ENCODE measurements at regions of chr10 and their contacts with region 1.

Region 1: DNA sequence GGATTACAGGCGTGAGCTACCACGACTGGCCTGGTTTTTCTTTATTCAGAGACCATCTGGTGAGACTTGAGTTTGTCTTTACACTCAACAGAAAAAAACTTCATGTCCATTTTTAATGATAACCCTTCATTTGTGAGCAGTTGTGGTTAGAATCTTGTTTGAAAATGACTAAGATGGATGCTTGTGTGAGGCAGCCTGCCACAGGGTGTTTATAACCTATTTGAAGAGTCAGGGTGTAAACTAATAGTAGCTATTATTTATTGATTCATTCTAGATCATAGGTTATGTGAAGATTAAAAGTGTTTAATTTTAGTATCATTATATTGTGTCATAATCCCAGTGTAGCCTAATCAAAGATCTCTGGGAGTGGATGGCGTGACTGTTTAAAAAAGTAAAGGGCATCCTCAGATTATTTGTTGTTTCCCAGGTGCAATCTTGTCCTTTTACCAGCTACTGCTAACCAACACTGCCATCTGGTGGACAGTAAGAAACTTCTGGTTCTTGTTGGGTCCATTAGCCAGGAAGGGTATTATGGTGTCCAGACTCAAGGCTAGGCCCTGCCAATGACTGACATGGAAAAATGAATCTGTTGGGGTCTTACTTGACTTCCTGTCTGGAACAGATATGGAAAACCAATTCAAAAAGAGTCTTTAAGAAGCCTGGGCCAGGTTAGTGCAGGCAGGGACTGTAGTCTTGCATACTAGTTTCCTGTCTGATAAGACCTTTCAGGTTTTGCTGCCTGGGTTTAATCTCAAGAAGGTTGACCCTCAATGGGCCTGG is 24.9 kb downstream of the NRBF2 start:
- DNase-seq: peak; percentile 70
- ATAC-seq: peak; percentile 82
- H3K4me3 Mint-ChIP-seq: no peak overlapping the region
- H3K27ac Mint-ChIP-seq: peak overlapping the region; percentile 46
- H3K4me1 Mint-ChIP-seq: peaks cover 21% of the 10 kb centered on the region
- H3K27me3 Mint-ChIP-seq: no peaks in the 10 kb centered on the region

Region 2: GRCh38 chr10:62437696-62438095 is 720.3 kb before region 1 on chr10:
- CTCF ChIA-PET with region 1: interaction called, 11 read pairs
- DNase-seq: no peak
- ATAC-seq: peak; percentile 63
- H3K4me3 Mint-ChIP-seq: no peak overlapping the region
- H3K27ac Mint-ChIP-seq: no peak overlapping the region
- H3K4me1 Mint-ChIP-seq: peaks cover 15% of the 10 kb centered on the region
- H3K27me3 Mint-ChIP-seq: peaks cover 35% of the 10 kb centered on the region

Region 3: GRCh38 chr10:62816331-62817120 is 341.5 kb before region 1 on chr10 and contains the start of gene EGR2:
- CTCF ChIA-PET with region 1: interaction called, 18 read pairs
- DNase-seq: peak; percentile 97
- ATAC-seq: peak; percentile 81
- H3K4me3 Mint-ChIP-seq: peak within 1 kb of the TSS; percentile 83
- H3K27ac Mint-ChIP-seq: peak within 1 kb of the TSS; percentile 92
- H3K4me1 Mint-ChIP-seq: peaks cover 44% of the 10 kb centered on the region
- H3K27me3 Mint-ChIP-seq: peaks cover 76% of the 10 kb centered on the region
- total RNA-seq, gene EGR2: 4.7 to 21.6 TPM

Region 4: GRCh38 chr10:63103971-63104409 is 54.0 kb before region 1 on chr10:
- CTCF ChIA-PET with region 1: no interaction called
- DNase-seq: peak; percentile 82
- ATAC-seq: peak; percentile 87
- H3K4me3 Mint-ChIP-seq: no peak overlapping the region
- H3K27ac Mint-ChIP-seq: peak overlapping the region; percentile 49
- H3K4me1 Mint-ChIP-seq: peaks cover 22% of the 10 kb centered on the region
- H3K27me3 Mint-ChIP-seq: peaks cover 5% of the 10 kb centered on the region

Region 5: DNA sequence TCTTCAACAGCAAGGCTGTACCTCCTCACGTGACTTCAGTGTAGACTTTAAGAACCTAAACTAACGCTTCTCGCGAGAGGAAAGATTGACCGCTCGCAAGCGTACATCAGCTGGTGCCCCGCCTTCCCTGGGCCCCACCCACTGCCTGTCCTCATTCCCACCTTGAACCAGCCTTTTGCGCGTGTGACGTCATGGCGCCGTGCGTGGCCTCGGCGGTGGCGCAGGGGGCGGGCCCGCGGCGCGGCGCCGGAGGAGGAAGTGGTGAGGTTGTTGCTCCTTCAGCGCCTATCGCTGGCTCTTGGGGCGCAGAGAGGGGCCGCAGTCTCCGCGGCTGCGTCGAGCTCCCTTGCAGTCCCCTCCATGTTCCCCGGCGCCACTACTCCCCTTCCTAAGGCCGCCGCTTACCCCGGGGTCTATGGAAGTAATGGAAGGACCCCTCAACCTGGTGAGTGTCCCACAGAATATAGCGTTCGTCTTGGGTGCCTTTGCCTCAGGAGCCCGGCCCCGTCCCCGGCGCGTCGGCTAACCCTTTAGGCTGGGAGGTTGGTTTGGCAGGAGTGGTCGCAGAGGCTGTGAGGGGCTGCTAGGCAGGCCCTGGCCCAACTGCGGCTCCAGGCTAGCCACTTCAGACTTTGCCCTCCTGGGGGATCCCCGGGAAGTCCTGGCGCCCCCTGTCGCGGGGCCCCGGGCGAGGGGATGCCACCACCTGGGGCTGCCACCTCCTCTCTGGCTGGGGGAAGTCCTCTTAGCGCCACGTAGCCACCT is 24.8 kb before region 1 on chr10 and contains the start of gene NRBF2:
- CTCF ChIA-PET with region 1: interaction called, 31 read pairs
- DNase-seq: peak; percentile 98
- ATAC-seq: peak; percentile 93
- H3K4me3 Mint-ChIP-seq: peak within 1 kb of the TSS; percentile 86
- H3K27ac Mint-ChIP-seq: peak within 1 kb of the TSS; percentile 94
- H3K4me1 Mint-ChIP-seq: peaks cover 39% of the 10 kb centered on the region
- H3K27me3 Mint-ChIP-seq: peaks cover 6% of the 10 kb centered on the region
- total RNA-seq, gene NRBF2: 20.3 to 25.2 TPM

Region 6: DNA sequence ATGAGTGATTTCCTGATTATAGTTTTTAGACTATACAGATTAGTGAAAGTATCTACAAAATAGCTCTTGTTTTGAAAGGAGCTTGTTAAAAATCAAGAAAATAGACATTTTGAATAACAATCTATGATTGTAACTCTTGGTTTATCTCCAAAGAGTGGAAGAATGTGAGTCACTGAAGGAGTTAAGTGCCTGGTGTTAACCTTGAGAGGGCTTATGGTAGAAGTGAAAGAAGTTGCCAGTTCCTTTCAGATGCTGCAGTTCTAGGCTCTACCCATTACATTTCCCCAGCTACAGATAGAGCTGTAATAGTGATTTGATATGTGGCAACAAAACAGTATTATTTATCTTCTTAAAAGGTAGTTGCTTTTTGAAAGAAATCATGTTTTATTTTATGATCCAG is 12.3 kb before region 1 on chr10:
- CTCF ChIA-PET with region 1: interaction called, 16 read pairs
- DNase-seq: no peak
- ATAC-seq: peak; percentile 45
- H3K4me3 Mint-ChIP-seq: no peak overlapping the region
- H3K27ac Mint-ChIP-seq: no peak overlapping the region
- H3K4me1 Mint-ChIP-seq: peaks cover 31% of the 10 kb centered on the region
- H3K27me3 Mint-ChIP-seq: no peaks in the 10 kb centered on the region

Region 7: DNA sequence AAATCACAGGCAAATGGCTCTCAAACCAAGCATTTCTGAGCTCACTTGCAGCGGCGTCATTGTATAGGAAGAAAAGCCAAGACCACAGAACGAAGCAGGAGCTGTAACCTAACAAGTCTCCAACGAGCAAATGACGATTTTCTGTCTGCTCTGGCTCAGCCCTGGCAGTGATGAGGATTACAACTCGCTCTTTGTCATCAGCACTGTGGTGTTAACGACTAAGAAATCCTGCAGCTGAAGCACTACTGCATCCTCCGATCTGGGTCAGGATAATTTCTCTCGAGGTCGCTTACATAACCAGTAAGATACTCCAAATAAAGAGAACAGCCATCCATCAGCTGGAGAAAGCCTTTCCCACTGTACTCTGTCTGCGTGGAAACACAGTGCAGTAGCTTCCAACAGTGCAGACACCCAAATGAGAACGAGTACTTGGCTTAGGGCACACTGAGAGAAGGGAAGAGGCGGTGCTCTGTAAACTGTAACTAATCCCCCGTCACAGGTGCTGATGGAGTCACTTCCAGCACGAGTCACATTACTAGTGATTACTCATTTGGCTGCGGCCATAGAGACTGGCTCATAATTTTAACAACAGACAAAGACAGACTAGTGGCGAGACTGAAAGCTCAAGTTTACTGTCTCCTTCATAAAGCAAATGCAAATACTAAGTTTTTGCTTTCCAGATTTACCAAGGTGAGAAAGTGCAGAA is 110.9 kb after region 1 on chr10:
- CTCF ChIA-PET with region 1: no interaction called
- DNase-seq: peak; percentile 91
- ATAC-seq: peak; percentile 94
- H3K4me3 Mint-ChIP-seq: peak overlapping the region; percentile 97
- H3K27ac Mint-ChIP-seq: peak overlapping the region; percentile 99
- H3K4me1 Mint-ChIP-seq: peaks cover 17% of the 10 kb centered on the region
- H3K27me3 Mint-ChIP-seq: no peaks in the 10 kb centered on the region

Region 8: GRCh38 chr10:63720072-63720537 is 562.1 kb after region 1 on chr10:
- CTCF ChIA-PET with region 1: interaction called, 28 read pairs
- DNase-seq: peak; percentile 64
- ATAC-seq: peak; percentile 63
- H3K4me3 Mint-ChIP-seq: no peak overlapping the region
- H3K27ac Mint-ChIP-seq: no peak overlapping the region
- H3K4me1 Mint-ChIP-seq: peaks cover 23% of the 10 kb centered on the region
- H3K27me3 Mint-ChIP-seq: peaks cover 8% of the 10 kb centered on the region